CD4-positive, alpha-beta memory T cell (primary cell): ENCODE measurements at regions of chr22 and their contacts with region 1.

Region 1: GRCh38 chr22:39388261-39389011 is 11.1 kb upstream of the TAB1 start:
- DNase-seq: peak; percentile 25 to 93 (median 86)
- H3K4me3 ChIP-seq: peak overlapping the region; percentile 17 to 56
- H3K4me3 Mint-ChIP-seq: peak overlapping the region; percentile 63 to 94 (median 88)
- H3K27ac ChIP-seq: peak overlapping the region; percentile 67
- H3K27ac Mint-ChIP-seq: peak overlapping the region; percentile 29 to 97 (median 89)
- H3K4me1 ChIP-seq: peaks cover 9% of the 10 kb centered on the region
- H3K4me1 Mint-ChIP-seq: peaks cover 2 to 24% (median 11%) of the 10 kb centered on the region in 4 donors
- H3K27me3 ChIP-seq: no peaks in the 10 kb centered on the region
- H3K27me3 Mint-ChIP-seq: peaks cover 0 to 2% of the 10 kb centered on the region in 2 donors

Region 2: DNA sequence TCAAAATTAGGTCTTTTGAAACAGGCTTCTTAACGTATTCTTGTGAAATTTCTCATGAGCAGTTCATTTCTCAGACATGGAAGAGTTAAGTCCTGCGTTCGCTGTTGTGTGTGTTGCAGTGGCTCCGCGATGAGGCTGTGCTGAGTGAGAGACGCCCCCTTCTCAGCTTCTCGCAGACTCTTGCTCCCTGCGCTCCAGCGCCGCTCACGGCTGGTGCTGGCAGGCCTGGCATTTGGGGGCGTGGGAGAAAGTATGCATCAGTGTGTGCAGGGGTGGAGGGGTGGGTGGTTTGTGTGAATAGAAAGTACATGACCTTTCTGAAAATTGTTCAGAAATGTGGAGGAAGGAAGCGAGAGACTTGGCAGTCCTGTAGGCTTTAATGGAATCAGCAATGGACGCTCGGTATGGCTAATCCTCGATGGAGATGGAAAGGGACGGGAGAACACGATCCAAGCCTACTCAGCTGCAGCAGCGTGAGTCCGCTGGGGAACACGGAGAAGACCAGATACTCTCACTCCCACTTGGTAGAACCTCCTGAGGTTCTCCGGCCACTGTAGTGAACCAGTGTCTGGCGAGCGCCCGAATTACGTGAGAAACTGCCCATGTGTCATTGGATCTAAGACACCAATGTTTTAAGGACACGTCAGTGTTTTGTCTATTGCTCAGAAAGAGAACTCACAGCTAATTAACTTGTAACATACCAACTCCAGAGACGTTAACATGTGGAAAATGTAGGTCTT is 17.1 kb after region 1 on chr22:
- CTCF ChIA-PET with region 1: interaction called, 33 read pairs
- POLR2A ChIA-PET with region 1: interaction called, 35 read pairs
- intact Hi-C with region 1: no loop called
- DNase-seq: no peak
- H3K4me3 ChIP-seq: no peak overlapping the region
- H3K4me3 Mint-ChIP-seq: peak overlapping the region in 1 of 8 donors; percentile 29
- H3K27ac ChIP-seq: no peak overlapping the region
- H3K27ac Mint-ChIP-seq: no peak overlapping the region
- H3K4me1 ChIP-seq: peaks cover 20% of the 10 kb centered on the region
- H3K4me1 Mint-ChIP-seq: peaks cover 29 to 57% (median 36%) of the 10 kb centered on the region in 4 donors
- H3K27me3 ChIP-seq: no peaks in the 10 kb centered on the region
- H3K27me3 Mint-ChIP-seq: no peaks in the 10 kb centered on the region